Left ventricle myocardium inferior (tissue), 1 donor: ENCODE measurements at regions of chr12 and their contacts with region 1.

Region 1: DNA sequence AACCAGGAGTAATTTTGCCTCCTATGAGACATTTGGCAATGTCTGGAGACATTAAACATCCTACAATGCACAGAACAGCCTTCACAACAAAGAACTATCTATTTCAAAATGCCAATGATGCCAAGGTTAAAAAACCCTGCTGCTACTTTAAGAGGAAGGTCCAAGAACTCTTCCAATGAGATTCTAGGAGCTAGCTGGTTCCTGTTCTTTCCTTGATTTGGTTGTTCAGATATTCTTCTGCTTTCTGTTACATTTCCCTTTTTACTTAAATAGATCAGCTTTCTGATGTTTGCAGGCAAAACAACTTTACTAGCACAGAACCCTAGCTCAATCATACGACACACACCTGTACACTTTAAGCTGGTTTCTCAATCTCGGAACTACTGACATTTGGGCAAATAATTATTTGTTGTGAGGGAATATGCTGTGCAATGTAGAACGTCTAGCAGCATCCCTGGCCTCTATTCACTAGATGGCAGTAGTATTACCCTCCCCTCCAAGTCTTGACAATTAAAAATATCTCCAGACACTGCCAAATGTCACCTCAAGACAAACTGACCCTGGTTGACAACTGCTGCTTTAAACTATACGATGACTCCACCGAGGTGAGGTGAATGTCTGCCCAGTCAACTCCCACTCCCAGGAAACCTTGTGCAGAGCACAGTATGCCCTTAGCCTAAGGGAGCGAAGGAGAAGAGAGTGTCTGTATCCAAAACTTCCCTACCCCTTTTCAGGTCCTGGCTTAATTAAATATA is 4.4 kb downstream of the BLTP3B start:
- DNase-seq: no peak
- H3K4me3 ChIP-seq: no peak overlapping the region
- H3K27ac ChIP-seq: peak overlapping the region; percentile 34
- H3K4me1 ChIP-seq: peaks cover 57% of the 10 kb centered on the region
- H3K27me3 ChIP-seq: no peaks in the 10 kb centered on the region
- CTCF ChIP-seq: peak; percentile 41

Region 2: DNA sequence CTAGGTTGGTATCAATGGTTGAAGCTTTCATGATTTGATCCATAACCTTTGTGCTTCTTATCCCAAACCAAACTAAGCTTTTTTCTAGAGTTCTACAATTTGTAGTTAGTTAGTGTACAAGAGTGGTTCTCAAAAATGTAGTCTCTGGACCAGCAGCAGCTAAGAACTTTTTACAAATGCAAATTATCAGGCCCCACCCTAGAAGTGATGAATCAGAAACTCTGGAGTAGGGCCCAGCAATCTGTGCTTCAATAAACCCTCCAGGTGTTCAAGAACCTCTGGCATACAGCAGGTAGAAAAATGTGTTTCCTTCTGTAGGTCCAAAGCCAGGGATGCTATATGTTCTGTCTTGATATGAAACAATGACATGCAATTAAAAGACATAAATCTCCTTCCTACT is 36.3 kb after region 1 on chr12:
- intact Hi-C with region 1: no loop called
- DNase-seq: no peak
- H3K4me3 ChIP-seq: no peak overlapping the region
- H3K27ac ChIP-seq: no peak overlapping the region
- H3K4me1 ChIP-seq: no peaks in the 10 kb centered on the region
- H3K27me3 ChIP-seq: no peaks in the 10 kb centered on the region
- CTCF ChIP-seq: no peak

Region 3: GRCh38 chr12:100266835-100267618 is 128.8 kb after region 1 on chr12 and contains the starts of genes DEPDC4 and SCYL2:
- intact Hi-C with region 1: loop called (anchors 10 kb)
- DNase-seq: peak; percentile 94
- H3K4me3 ChIP-seq: peak within 1 kb of the TSS; percentile 94
- H3K27ac ChIP-seq: peak within 1 kb of the TSS; percentile 95
- H3K4me1 ChIP-seq: peaks cover 53% of the 10 kb centered on the region
- H3K27me3 ChIP-seq: no peaks in the 10 kb centered on the region
- CTCF ChIP-seq: peak; percentile 24
- total RNA-seq, gene DEPDC4: 0.47 TPM
- total RNA-seq, gene SCYL2: 36.2 TPM

Region 4: DNA sequence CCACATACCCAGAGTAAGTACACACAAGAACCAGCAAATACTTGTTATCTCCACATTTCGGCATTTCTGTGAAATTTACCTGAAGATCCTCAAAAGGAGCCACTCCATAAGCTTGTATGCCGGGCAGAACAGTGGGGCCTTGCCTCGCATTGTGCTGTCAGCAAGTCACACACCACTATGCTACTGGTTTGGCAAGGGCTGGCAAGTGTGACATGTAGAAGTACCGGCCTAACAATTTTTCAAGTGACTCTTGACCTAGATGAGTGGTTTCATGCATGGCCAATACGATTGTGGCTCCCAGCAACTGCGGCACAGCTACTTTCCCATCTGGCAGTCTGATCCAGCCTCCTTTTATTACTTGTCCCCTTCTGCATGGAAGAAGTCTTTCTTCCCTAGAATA is 505.0 kb after region 1 on chr12:
- intact Hi-C with region 1: no loop called
- DNase-seq: no peak
- H3K4me3 ChIP-seq: no peak overlapping the region
- H3K27ac ChIP-seq: no peak overlapping the region
- H3K4me1 ChIP-seq: no peaks in the 10 kb centered on the region
- H3K27me3 ChIP-seq: no peaks in the 10 kb centered on the region
- CTCF ChIP-seq: no peak